CD4-positive, alpha-beta memory T cell (primary cell): ENCODE measurements at regions of chr11 and their contacts with region 1.

Region 1: DNA sequence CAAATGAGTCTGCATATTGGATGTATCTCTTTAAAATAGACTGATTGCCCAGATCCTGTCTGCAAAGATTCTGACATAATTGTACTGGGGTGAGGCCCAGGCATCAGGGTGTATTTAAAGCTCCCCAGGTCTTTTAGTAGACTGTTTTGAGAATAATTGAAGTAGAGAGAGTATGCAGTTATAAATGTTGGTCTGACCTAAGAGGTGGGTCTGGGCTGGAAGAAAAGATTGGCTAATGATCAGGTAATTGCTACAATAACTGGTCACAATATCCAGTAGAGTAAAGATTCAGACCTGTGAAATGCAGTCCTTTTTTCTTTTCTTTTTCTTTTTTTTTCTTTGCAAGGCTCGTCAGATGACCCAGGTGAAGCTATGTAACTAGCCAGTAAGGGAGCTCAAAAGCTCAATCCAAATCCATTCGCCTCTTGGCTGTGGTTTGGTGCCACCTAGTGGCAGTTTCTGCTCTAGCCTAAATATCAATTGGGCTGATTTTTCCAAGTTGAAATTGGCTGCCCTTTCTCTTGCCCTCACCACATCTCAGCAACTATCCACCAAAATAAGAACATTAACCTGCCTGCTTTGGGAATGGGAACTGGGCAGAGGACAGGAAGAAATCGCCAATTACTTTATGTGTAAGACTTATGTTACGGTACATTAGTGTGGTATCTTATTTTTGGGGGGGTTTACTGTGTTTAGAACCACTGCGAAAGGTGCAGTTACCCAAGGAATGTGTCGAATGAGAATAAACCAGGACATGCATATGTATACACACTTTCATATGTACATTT is 45.9 kb downstream of the ZNF143 start:
- DNase-seq: peak; percentile 63 to 68 (median 65)
- H3K4me3 ChIP-seq: no peak overlapping the region
- H3K4me3 Mint-ChIP-seq: no peak overlapping the region
- H3K27ac ChIP-seq: no peak overlapping the region
- H3K27ac Mint-ChIP-seq: peak overlapping the region in 3 of 7 donors; percentile 62 to 73 (median 67)
- H3K4me1 ChIP-seq: peaks cover 10% of the 10 kb centered on the region
- H3K4me1 Mint-ChIP-seq: peaks cover 9 to 18% (median 12%) of the 10 kb centered on the region in 4 donors
- H3K27me3 ChIP-seq: no peaks in the 10 kb centered on the region
- H3K27me3 Mint-ChIP-seq: no peaks in the 10 kb centered on the region

Region 2: GRCh38 chr11:9015677-9016076 is 491.0 kb before region 1 on chr11:
- CTCF ChIA-PET with region 1: interaction called, 131 read pairs
- POLR2A ChIA-PET with region 1: no interaction called
- intact Hi-C with region 1: loop called (anchors 1 kb)
- DNase-seq: peak; percentile 51 to 59 (median 55)
- H3K4me3 ChIP-seq: no peak overlapping the region
- H3K4me3 Mint-ChIP-seq: no peak overlapping the region
- H3K27ac ChIP-seq: no peak overlapping the region
- H3K27ac Mint-ChIP-seq: no peak overlapping the region
- H3K4me1 ChIP-seq: peaks cover 20% of the 10 kb centered on the region
- H3K4me1 Mint-ChIP-seq: peaks cover 18 to 37% (median 25%) of the 10 kb centered on the region in 4 donors
- H3K27me3 ChIP-seq: no peaks in the 10 kb centered on the region
- H3K27me3 Mint-ChIP-seq: peaks cover 0 to 2% of the 10 kb centered on the region in 2 donors

Region 3: GRCh38 chr11:9438611-9439010 is 68.1 kb before region 1 on chr11:
- CTCF ChIA-PET with region 1: interaction called, 14 read pairs
- POLR2A ChIA-PET with region 1: no interaction called
- intact Hi-C with region 1: no loop called
- DNase-seq: no peak
- H3K4me3 ChIP-seq: no peak overlapping the region
- H3K4me3 Mint-ChIP-seq: no peak overlapping the region
- H3K27ac ChIP-seq: no peak overlapping the region
- H3K27ac Mint-ChIP-seq: peak overlapping the region in 1 of 7 donors; percentile 12
- H3K4me1 ChIP-seq: no peaks in the 10 kb centered on the region
- H3K4me1 Mint-ChIP-seq: no peaks in the 10 kb centered on the region
- H3K27me3 ChIP-seq: no peaks in the 10 kb centered on the region
- H3K27me3 Mint-ChIP-seq: no peaks in the 10 kb centered on the region

Region 4: DNA sequence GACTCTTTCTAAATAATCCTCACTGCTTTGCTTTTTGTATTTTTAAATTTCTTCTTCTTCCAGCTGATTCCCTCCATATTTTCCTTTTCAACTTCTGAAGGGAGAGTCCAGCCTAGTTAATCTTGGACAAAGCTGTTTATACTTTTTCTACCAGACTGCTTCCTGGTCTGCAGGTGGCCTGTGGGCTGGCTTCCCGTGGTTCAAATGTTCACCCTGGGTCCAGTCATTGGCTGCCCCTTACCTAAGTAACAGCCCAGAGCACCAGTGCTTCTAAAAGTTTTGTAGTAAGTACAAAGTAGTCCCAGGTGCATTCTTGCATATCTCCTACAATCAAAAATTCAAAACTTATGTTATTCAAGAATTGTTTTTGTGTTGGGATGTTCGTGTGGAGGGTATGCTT is 26.8 kb before region 1 on chr11:
- CTCF ChIA-PET with region 1: interaction called, 16 read pairs
- POLR2A ChIA-PET with region 1: no interaction called
- intact Hi-C with region 1: no loop called
- DNase-seq: no peak
- H3K4me3 ChIP-seq: no peak overlapping the region
- H3K4me3 Mint-ChIP-seq: no peak overlapping the region
- H3K27ac ChIP-seq: no peak overlapping the region
- H3K27ac Mint-ChIP-seq: peak overlapping the region in 2 of 7 donors; percentile 15 to 72
- H3K4me1 ChIP-seq: no peaks in the 10 kb centered on the region
- H3K4me1 Mint-ChIP-seq: no peaks in the 10 kb centered on the region
- H3K27me3 ChIP-seq: no peaks in the 10 kb centered on the region
- H3K27me3 Mint-ChIP-seq: no peaks in the 10 kb centered on the region

Region 5: DNA sequence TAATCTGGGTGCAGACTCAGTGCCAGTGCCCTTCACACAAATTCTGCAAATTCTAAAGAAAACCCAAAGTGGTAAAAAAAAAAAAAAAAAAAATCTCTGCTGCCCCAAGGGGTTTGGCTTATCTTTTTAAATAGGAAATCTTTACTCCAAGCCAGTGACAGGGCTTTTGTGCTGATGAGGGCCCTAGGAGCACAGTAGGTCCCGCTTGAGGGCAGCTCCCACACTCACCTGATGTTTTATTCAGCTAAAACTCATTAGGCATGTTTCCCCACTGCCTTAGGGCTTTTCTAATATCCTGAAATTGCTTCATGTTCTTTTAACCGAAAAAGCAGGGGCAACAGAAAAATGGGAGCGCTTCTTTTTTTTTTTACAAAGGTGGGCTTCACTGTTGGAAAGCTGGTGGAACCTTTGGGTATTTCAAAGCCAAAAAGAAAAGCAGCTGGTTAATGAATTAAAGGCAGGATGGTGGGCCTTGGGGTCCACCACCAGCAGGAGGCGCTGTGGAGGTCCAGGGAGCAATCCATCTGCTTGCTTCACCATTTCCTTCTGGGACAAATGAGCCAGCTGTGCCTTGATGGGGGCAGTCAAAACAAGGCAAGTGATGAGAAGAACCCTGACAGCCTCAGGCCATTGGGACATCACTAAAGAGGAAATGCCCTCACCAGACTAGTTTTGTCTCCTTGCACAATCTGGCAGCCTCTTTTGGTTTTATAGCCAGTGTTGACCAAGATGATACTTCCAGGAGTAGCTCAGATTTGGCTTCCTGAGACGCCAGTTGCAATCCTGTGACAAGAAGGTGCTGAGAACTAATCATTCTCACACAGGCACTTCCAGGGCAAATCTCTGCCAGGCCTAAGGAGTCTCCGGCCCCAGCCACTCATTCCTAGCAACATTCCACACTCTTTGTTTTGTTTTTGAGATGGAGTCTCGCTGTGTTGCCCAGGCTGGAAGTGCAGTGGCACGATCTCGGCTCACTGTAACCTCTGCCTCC is 28.4 kb after region 1 on chr11:
- CTCF ChIA-PET with region 1: interaction called, 17 read pairs
- POLR2A ChIA-PET with region 1: no interaction called
- intact Hi-C with region 1: no loop called
- DNase-seq: peak; percentile 63 to 73 (median 66)
- H3K4me3 ChIP-seq: no peak overlapping the region
- H3K4me3 Mint-ChIP-seq: no peak overlapping the region
- H3K27ac ChIP-seq: no peak overlapping the region
- H3K27ac Mint-ChIP-seq: peak overlapping the region in 2 of 7 donors; percentile 7 to 43
- H3K4me1 ChIP-seq: no peaks in the 10 kb centered on the region
- H3K4me1 Mint-ChIP-seq: peaks cover 0 to 2% (median 0%) of the 10 kb centered on the region in 4 donors
- H3K27me3 ChIP-seq: no peaks in the 10 kb centered on the region
- H3K27me3 Mint-ChIP-seq: no peaks in the 10 kb centered on the region